ENCODE measurements at regions of chr12 and their contacts with region 1.

Region 1: GRCh38 chr12:89524541-89525285 is at the start of gene GALNT4:
- DNase-seq: peak; percentile 90 to 95
- ATAC-seq: peak; percentile 88 to 93
- H3K4me3 ChIP-seq: peak within 1 kb of the TSS; percentile 75
- H3K27ac ChIP-seq: peak within 1 kb of the TSS; percentile 93 to 96
- H3K4me1 ChIP-seq: peaks cover 48% of the 10 kb centered on the region
- CTCF ChIP-seq: peak; percentile 62
- EP300 ChIP-seq: no peak
- POLR2A ChIP-seq: peak; percentile 51
- RAD21 ChIP-seq: peak; percentile 55 to 68
- polyA plus RNA-seq, gene GALNT4: 12.6 and 14.3 TPM in 2 replicates

Region 2: GRCh38 chr12:88993651-88994050 is 531.1 kb before region 1 on chr12:
- CTCF ChIA-PET with region 1: interaction called, 3 read pairs
- POLR2A ChIA-PET with region 1: interaction called, 11 read pairs
- DNase-seq: peak; percentile 18 to 69
- ATAC-seq: peak in 1 of 2 experiments; percentile 76; a peak in 3 of 6 replicates
- H3K4me3 ChIP-seq: no peak overlapping the region
- H3K27ac ChIP-seq: no peak overlapping the region
- H3K4me1 ChIP-seq: no peaks in the 10 kb centered on the region
- CTCF ChIP-seq: peak; percentile 75
- EP300 ChIP-seq: no peak
- POLR2A ChIP-seq: no peak
- RAD21 ChIP-seq: peak; percentile 91

Region 3: DNA sequence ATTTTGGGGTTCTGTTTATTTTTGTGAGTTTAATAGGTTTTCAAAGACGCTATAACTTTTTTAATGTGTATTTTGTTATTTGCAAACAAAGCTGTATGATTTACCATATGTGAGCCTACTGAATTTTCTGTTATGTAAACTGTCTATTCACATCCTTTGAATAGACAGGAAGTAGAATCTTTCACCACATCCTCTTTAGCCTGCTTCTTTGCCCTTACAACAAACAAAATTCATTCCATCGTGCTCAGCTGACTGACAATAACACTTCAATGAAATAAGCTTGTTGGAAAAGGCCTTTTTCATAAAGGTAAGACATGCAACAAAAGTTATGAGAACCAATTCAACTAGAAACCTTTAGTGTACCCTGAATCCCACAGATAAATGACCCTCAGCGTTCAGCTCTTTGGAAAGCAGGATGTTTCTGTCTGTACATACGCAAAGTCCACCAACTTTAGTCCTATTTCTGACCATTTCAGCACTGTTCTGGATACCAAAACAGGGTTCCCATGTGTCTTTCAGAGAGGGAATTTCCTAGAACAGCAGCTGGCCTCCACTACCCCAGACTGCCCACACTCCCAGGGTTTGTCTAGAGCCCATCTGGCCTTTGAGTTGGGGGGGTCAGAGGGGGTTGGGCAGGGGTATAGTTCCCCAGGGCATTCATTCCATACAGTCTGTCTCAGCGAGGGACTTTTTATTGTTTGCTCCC is 243.7 kb before region 1 on chr12:
- CTCF ChIA-PET with region 1: no interaction called
- POLR2A ChIA-PET with region 1: no interaction called
- DNase-seq: no peak
- ATAC-seq: no peak
- H3K4me3 ChIP-seq: no peak overlapping the region
- H3K27ac ChIP-seq: no peak overlapping the region
- H3K4me1 ChIP-seq: no peaks in the 10 kb centered on the region
- CTCF ChIP-seq: no peak
- EP300 ChIP-seq: no peak
- POLR2A ChIP-seq: no peak
- RAD21 ChIP-seq: no peak

Region 4: DNA sequence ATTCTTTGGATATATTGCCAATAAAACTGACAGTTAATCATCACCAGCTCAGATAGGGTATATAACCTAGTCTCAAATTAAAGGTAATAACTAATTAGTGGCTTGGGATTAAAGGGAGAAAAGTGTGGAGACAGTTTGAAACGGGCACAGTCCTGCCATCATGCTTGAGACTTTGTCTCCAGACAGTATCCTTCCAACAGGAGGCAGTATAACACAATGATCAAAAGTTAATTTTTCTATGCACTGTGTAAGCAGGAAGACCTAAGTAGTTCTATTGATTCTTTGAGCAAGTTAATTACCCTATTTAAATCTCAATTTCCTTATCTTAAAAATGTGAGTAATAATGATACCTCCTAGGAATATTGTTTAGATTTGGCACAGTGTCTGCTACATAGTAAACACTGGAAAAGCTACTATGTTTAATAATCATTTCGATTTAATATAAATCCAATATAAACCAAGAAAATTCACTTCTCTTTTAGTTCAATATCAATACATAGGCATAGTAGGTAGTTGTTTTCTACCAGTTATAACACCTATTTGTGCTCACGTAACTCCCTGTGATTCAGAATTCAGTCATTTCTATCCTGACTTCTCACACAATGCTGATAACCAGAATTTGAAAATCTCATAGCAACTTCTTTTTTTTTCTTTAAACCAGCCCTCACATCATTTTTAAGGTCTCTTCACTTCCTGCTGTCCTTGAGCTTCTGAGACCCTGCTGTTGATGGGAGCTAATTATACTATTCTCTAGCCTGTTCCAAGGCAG is 53.8 kb before region 1 on chr12:
- CTCF ChIA-PET with region 1: interaction called, 34 read pairs
- POLR2A ChIA-PET with region 1: interaction called, 3 read pairs
- DNase-seq: peak; percentile 20 to 70
- ATAC-seq: peak; percentile 90 to 95
- H3K4me3 ChIP-seq: no peak overlapping the region
- H3K27ac ChIP-seq: peak overlapping the region in 1 of 2 experiments; percentile 43; a peak in 1 of 6 replicates
- H3K4me1 ChIP-seq: peaks cover 51% of the 10 kb centered on the region
- CTCF ChIP-seq: peak; percentile 83
- EP300 ChIP-seq: no peak
- POLR2A ChIP-seq: no peak
- RAD21 ChIP-seq: peak; percentile 83 to 86

Region 5: DNA sequence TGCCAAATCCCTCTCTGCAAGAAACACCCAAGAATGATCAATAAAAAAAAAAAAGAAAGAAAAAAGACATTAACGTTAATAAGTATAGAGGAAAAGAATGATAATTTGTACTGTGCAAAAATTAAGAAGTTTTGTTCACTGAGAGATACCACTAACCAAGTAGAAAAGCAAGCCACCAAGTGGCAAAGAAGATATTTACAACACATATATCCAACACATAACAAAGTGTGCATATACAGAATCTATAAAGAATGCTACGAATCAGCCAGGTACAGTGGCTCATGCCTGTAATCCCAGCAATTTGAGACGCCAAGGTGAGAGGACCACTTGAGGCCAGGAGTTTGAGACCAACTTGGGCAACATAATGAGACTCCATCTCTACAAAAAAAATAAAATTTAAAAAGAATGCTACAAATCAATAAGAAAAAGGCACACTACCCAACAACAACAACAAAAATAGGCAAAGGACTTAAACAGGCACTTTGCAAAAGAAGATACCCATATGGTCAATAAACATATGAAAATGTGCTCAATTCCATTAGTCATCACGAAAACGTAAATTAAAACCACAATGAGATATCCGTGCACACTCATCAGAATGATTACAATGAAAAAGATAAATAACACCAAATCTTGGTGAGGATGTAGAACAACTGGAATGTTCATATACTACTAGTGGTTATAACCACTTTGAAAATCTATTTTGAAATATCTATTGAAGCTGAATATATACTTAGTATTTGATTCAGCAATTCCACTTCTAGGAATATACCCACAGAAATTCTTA is 20.0 kb before region 1 on chr12:
- CTCF ChIA-PET with region 1: interaction called, 23 read pairs
- POLR2A ChIA-PET with region 1: no interaction called
- DNase-seq: no peak
- ATAC-seq: no peak
- H3K4me3 ChIP-seq: no peak overlapping the region
- H3K27ac ChIP-seq: peak overlapping the region in 1 of 2 experiments; percentile 78; a peak in 2 of 6 replicates
- H3K4me1 ChIP-seq: peaks cover 49% of the 10 kb centered on the region
- CTCF ChIP-seq: 0 out of 3 replicates have a peak, but pooled peaks have one; percentile 13
- EP300 ChIP-seq: no peak
- POLR2A ChIP-seq: no peak
- RAD21 ChIP-seq: no peak

Measured in A549 (cell line).